CD4-positive, alpha-beta memory T cell (primary cell): ENCODE measurements at regions of chr17 and their contacts with region 1.

Region 1: GRCh38 chr17:44533533-44534246 is 23.6 kb upstream of the FZD2 start:
- DNase-seq: peak; percentile 68 to 76 (median 74)
- H3K4me3 ChIP-seq: no peak overlapping the region
- H3K4me3 Mint-ChIP-seq: peak overlapping the region in 2 of 8 donors; percentile 5 to 33
- H3K27ac ChIP-seq: no peak overlapping the region
- H3K27ac Mint-ChIP-seq: peak overlapping the region in 3 of 7 donors; percentile 38 to 75 (median 69)
- H3K4me1 ChIP-seq: peaks cover 8% of the 10 kb centered on the region
- H3K4me1 Mint-ChIP-seq: peaks cover 3 to 9% (median 7%) of the 10 kb centered on the region in 4 donors
- H3K27me3 ChIP-seq: no peaks in the 10 kb centered on the region
- H3K27me3 Mint-ChIP-seq: peaks cover 0 to 5% of the 10 kb centered on the region in 2 donors

Region 2: GRCh38 chr17:44522883-44523671 is 10.6 kb before region 1 on chr17:
- CTCF ChIA-PET with region 1: interaction called, 12 read pairs
- POLR2A ChIA-PET with region 1: no interaction called
- intact Hi-C with region 1: no loop called
- DNase-seq: peak in 2 of 5 donors; percentile 5 to 16
- H3K4me3 ChIP-seq: no peak overlapping the region
- H3K4me3 Mint-ChIP-seq: no peak overlapping the region
- H3K27ac ChIP-seq: no peak overlapping the region
- H3K27ac Mint-ChIP-seq: no peak overlapping the region
- H3K4me1 ChIP-seq: no peaks in the 10 kb centered on the region
- H3K4me1 Mint-ChIP-seq: no peaks in the 10 kb centered on the region
- H3K27me3 ChIP-seq: no peaks in the 10 kb centered on the region
- H3K27me3 Mint-ChIP-seq: peaks cover 12 to 13% of the 10 kb centered on the region in 2 donors

Region 3: GRCh38 chr17:44546671-44547606 is 13.2 kb after region 1 on chr17:
- CTCF ChIA-PET with region 1: interaction called, 22 read pairs
- POLR2A ChIA-PET with region 1: no interaction called
- intact Hi-C with region 1: no loop called
- DNase-seq: no peak
- H3K4me3 ChIP-seq: no peak overlapping the region
- H3K4me3 Mint-ChIP-seq: no peak overlapping the region
- H3K27ac ChIP-seq: no peak overlapping the region
- H3K27ac Mint-ChIP-seq: no peak overlapping the region
- H3K4me1 ChIP-seq: no peaks in the 10 kb centered on the region
- H3K4me1 Mint-ChIP-seq: no peaks in the 10 kb centered on the region
- H3K27me3 ChIP-seq: no peaks in the 10 kb centered on the region
- H3K27me3 Mint-ChIP-seq: peaks cover 22 to 47% of the 10 kb centered on the region in 2 donors

Region 4: GRCh38 chr17:44636562-44636961 is 102.9 kb after region 1 on chr17:
- CTCF ChIA-PET with region 1: interaction called, 5 read pairs
- POLR2A ChIA-PET with region 1: no interaction called
- intact Hi-C with region 1: loop called (anchors 5 kb)
- DNase-seq: no peak
- H3K4me3 ChIP-seq: no peak overlapping the region
- H3K4me3 Mint-ChIP-seq: no peak overlapping the region
- H3K27ac ChIP-seq: no peak overlapping the region
- H3K27ac Mint-ChIP-seq: no peak overlapping the region
- H3K4me1 ChIP-seq: no peaks in the 10 kb centered on the region
- H3K4me1 Mint-ChIP-seq: no peaks in the 10 kb centered on the region
- H3K27me3 ChIP-seq: no peaks in the 10 kb centered on the region
- H3K27me3 Mint-ChIP-seq: peaks cover under 1 to 10% of the 10 kb centered on the region in 2 donors

Region 5: DNA sequence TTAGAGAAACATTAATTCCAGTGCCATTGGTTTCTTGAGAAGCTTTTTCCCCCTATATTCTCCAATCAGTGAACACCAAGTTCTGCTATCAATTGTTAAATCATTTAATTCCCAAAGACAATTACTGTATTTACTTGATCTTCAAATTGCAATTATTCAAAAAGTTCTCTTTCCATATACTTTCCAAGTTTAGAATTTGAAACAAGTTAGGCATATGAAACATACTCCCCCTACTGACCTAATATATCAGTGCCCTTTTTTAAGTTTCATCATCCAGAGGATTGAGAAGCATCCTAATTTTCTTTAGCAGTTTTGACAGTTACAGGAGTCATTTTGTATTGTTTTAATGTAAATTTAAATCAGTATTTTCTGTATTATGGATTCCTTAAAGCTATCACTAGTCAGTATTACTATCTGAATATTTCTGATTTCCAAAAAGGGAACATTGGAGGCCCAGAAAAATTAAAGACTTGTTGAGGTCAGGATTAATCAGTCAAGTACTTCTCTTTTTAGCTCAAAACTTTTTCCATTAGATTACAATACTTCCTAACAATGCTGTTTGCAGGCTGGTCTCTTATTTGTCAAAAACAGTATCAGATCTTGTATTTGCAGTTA is 138.9 kb after region 1 on chr17:
- CTCF ChIA-PET with region 1: interaction called, 10 read pairs
- POLR2A ChIA-PET with region 1: no interaction called
- intact Hi-C with region 1: loop called (anchors 1 kb)
- DNase-seq: no peak
- H3K4me3 ChIP-seq: no peak overlapping the region
- H3K4me3 Mint-ChIP-seq: no peak overlapping the region
- H3K27ac ChIP-seq: no peak overlapping the region
- H3K27ac Mint-ChIP-seq: no peak overlapping the region
- H3K4me1 ChIP-seq: no peaks in the 10 kb centered on the region
- H3K4me1 Mint-ChIP-seq: no peaks in the 10 kb centered on the region
- H3K27me3 ChIP-seq: no peaks in the 10 kb centered on the region
- H3K27me3 Mint-ChIP-seq: peaks cover 0 to 2% of the 10 kb centered on the region in 2 donors

Region 6: DNA sequence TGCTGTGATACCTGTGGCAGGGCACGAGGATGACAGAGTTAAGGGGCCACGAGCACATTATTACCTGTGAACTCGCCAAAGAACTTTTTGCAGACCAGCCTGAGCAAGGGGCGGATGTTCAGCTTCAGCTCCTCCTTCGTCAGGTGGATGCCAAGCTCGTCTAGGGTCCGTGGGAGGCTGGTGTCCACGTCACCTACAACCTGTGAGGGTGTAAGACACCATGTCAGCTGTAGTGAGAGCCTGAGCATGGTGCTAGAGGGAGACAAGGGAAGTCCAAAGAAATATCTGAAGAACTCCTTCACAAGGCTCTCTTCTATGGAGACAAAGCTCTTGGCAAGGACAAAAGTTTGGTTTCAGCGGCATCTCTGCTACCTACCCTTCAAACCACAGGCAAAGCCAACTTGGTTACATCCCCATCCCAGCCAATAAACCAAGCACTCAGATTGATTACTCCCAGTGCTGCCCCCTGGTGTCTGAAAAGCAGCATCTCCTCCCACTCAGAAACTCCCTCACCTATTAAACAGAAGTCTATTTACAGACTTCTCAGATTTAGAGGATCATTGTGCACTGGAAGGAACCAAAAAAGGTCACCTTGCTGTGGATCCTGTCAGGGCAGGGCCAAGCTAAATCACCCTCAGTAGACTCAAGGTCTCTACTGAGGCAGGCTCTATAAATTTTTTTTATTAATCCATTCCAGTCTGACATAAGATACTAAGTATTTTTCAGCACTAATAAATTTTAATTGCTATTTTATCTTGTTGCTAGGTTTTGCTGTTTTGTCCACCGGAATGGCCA is 331.4 kb after region 1 on chr17:
- CTCF ChIA-PET with region 1: interaction called, 10 read pairs
- POLR2A ChIA-PET with region 1: no interaction called
- intact Hi-C with region 1: no loop called
- DNase-seq: peak; percentile 62 to 70 (median 69)
- H3K4me3 ChIP-seq: no peak overlapping the region
- H3K4me3 Mint-ChIP-seq: no peak overlapping the region
- H3K27ac ChIP-seq: no peak overlapping the region
- H3K27ac Mint-ChIP-seq: no peak overlapping the region
- H3K4me1 ChIP-seq: no peaks in the 10 kb centered on the region
- H3K4me1 Mint-ChIP-seq: peaks cover 0 to 4% (median 0%) of the 10 kb centered on the region in 4 donors
- H3K27me3 ChIP-seq: no peaks in the 10 kb centered on the region
- H3K27me3 Mint-ChIP-seq: no peaks in the 10 kb centered on the region

Region 7: DNA sequence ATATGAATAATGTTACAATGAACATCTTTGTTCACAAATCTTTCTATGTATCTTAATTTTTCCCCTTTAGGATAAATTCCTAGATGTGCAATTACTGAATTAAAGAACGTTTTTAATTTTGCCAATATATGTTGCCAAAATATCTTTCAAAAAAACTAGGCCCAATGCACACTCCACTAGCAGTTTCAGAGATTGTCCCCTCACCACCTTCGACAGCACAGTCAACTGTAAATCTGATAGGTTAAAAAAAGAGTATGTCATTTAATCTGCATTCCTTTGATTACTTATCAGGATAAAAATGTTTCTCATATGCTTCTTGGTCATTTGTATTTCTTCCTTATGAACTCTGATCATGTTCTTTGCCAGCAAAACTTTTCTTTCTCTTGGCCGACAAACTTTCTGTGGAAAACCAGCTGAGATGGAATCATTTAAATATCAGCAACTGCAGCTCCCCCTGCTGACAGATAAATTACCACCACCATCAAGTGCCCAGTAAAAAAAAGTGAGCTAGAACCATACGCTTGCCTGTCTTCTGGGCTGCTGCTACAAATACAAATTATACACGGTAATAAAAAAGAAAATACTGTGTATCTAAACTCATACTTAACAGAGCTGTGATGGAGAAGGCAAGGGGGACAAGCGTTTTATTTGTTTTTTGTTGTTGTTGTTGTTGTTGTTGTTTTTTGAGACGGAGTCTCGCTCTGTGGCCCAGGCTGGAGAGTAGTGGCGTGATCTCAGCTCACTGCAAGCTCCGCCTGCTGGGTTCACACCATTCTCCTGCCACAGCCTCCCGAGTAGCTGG is 1679.1 kb after region 1 on chr17:
- CTCF ChIA-PET with region 1: no interaction called
- POLR2A ChIA-PET with region 1: no interaction called
- intact Hi-C with region 1: no loop called
- DNase-seq: peak; percentile 73 to 80 (median 76)
- H3K4me3 ChIP-seq: no peak overlapping the region
- H3K4me3 Mint-ChIP-seq: peak overlapping the region in 2 of 8 donors; percentile 1 to 15
- H3K27ac ChIP-seq: no peak overlapping the region
- H3K27ac Mint-ChIP-seq: peak overlapping the region; percentile 9 to 92 (median 54)
- H3K4me1 ChIP-seq: peaks cover 5% of the 10 kb centered on the region
- H3K4me1 Mint-ChIP-seq: peaks cover 19 to 43% (median 26%) of the 10 kb centered on the region in 4 donors
- H3K27me3 ChIP-seq: no peaks in the 10 kb centered on the region
- H3K27me3 Mint-ChIP-seq: no peaks in the 10 kb centered on the region